CD8-positive, alpha-beta T cell (primary cell): ENCODE measurements at regions of chr6 and their contacts with region 1.

Region 1: GRCh38 chr6:170554013-170554795 is at the start of gene TBP:
- DNase-seq: peak; percentile 93 to 99 (median 98)
- ATAC-seq: peak; percentile 91
- H3K4me3 ChIP-seq: peak within 1 kb of the TSS; percentile 61 to 93
- H3K4me3 Mint-ChIP-seq: no peak within 1 kb of the TSS
- H3K27ac ChIP-seq: peak within 1 kb of the TSS; percentile 89 to 96
- H3K27ac Mint-ChIP-seq: no peak within 1 kb of the TSS
- H3K4me1 ChIP-seq: peaks cover 39% of the 10 kb centered on the region
- H3K4me1 Mint-ChIP-seq: peaks cover 38% of the 10 kb centered on the region
- H3K27me3 ChIP-seq: no peaks in the 10 kb centered on the region
- H3K27me3 Mint-ChIP-seq: no peaks in the 10 kb centered on the region
- CTCF ChIP-seq: no peak
- total RNA-seq, gene TBP: 13.8 to 13.9 TPM

Region 2: GRCh38 chr6:169212897-169213813 is 1341.0 kb before region 1 on chr6:
- CTCF ChIA-PET with region 1: no interaction called
- POLR2A ChIA-PET with region 1: no interaction called
- intact Hi-C with region 1: loop called (anchors 10 kb)
- DNase-seq: peak; percentile 80 to 95 (median 86)
- ATAC-seq: peak; percentile 99
- H3K4me3 ChIP-seq: peak overlapping the region; percentile 20 to 23
- H3K4me3 Mint-ChIP-seq: peak overlapping the region; percentile 72
- H3K27ac ChIP-seq: peak overlapping the region in 1 of 2 experiments; percentile 66
- H3K27ac Mint-ChIP-seq: peak overlapping the region; percentile 78
- H3K4me1 ChIP-seq: peaks cover 7% of the 10 kb centered on the region
- H3K4me1 Mint-ChIP-seq: peaks cover 9% of the 10 kb centered on the region
- H3K27me3 ChIP-seq: no peaks in the 10 kb centered on the region
- H3K27me3 Mint-ChIP-seq: no peaks in the 10 kb centered on the region
- CTCF ChIP-seq: no peak

Region 3: GRCh38 chr6:170473301-170473717 is 80.9 kb before region 1 on chr6:
- CTCF ChIA-PET with region 1: no interaction called
- POLR2A ChIA-PET with region 1: no interaction called
- intact Hi-C with region 1: no loop called
- DNase-seq: no peak
- ATAC-seq: no peak
- H3K4me3 ChIP-seq: no peak overlapping the region
- H3K4me3 Mint-ChIP-seq: no peak overlapping the region
- H3K27ac ChIP-seq: no peak overlapping the region
- H3K27ac Mint-ChIP-seq: no peak overlapping the region
- H3K4me1 ChIP-seq: no peaks in the 10 kb centered on the region
- H3K4me1 Mint-ChIP-seq: no peaks in the 10 kb centered on the region
- H3K27me3 ChIP-seq: no peaks in the 10 kb centered on the region
- H3K27me3 Mint-ChIP-seq: peaks cover 6% of the 10 kb centered on the region
- CTCF ChIP-seq: no peak